OCI-LY7 (cell line): ENCODE measurements at regions of chr20 and their contacts with region 1.

Region 1: GRCh38 chr20:20237093-20237959 is 130.6 kb upstream of the INSM1 start:
- DNase-seq: peak; percentile 41
- H3K4me3 ChIP-seq: no peak overlapping the region
- H3K27ac ChIP-seq: no peak overlapping the region
- H3K4me1 ChIP-seq: no peaks in the 10 kb centered on the region
- CTCF ChIP-seq: peak; percentile 79

Region 2: GRCh38 chr20:20195021-20195705 is 42.2 kb before region 1 on chr20:
- CTCF ChIA-PET with region 1: no interaction called
- POLR2A ChIA-PET with region 1: no interaction called
- intact Hi-C with region 1: no loop called
- DNase-seq: no peak
- H3K4me3 ChIP-seq: no peak overlapping the region
- H3K27ac ChIP-seq: no peak overlapping the region
- H3K4me1 ChIP-seq: no peaks in the 10 kb centered on the region
- CTCF ChIP-seq: no peak

Region 3: GRCh38 chr20:20303742-20304141 is 66.4 kb after region 1 on chr20:
- CTCF ChIA-PET with region 1: no interaction called
- POLR2A ChIA-PET with region 1: no interaction called
- intact Hi-C with region 1: loop called (anchors 10 kb)
- DNase-seq: peak; percentile 2
- H3K4me3 ChIP-seq: no peak overlapping the region
- H3K27ac ChIP-seq: no peak overlapping the region
- H3K4me1 ChIP-seq: no peaks in the 10 kb centered on the region
- CTCF ChIP-seq: no peak

Region 4: GRCh38 chr20:20658871-20659431 is 421.6 kb after region 1 on chr20:
- CTCF ChIA-PET with region 1: no interaction called
- POLR2A ChIA-PET with region 1: no interaction called
- intact Hi-C with region 1: no loop called
- DNase-seq: no peak
- H3K4me3 ChIP-seq: no peak overlapping the region
- H3K27ac ChIP-seq: no peak overlapping the region
- H3K4me1 ChIP-seq: no peaks in the 10 kb centered on the region
- CTCF ChIP-seq: no peak